Activated CD4-positive, alpha-beta T cell treated with anti-CD3 and anti-CD28 coated beads, Interleukin-2, amount 10 ng/mL, durations not matched to agents 24 days and 14 days (primary cell): ENCODE measurements at regions of chr1 and their contacts with region 1.

Region 1: GRCh38 chr1:207321079-207321789 is at the start of gene CD55:
- DNase-seq: peak; percentile 100
- H3K4me3 Mint-ChIP-seq: peak within 1 kb of the TSS; percentile 98
- H3K27ac Mint-ChIP-seq: peak within 1 kb of the TSS; percentile 100
- H3K4me1 Mint-ChIP-seq: peaks cover 35% of the 10 kb centered on the region
- H3K27me3 Mint-ChIP-seq: peaks cover 3% of the 10 kb centered on the region
- total RNA-seq, gene CD55: 133 and 142 TPM in 2 replicates

Region 2: DNA sequence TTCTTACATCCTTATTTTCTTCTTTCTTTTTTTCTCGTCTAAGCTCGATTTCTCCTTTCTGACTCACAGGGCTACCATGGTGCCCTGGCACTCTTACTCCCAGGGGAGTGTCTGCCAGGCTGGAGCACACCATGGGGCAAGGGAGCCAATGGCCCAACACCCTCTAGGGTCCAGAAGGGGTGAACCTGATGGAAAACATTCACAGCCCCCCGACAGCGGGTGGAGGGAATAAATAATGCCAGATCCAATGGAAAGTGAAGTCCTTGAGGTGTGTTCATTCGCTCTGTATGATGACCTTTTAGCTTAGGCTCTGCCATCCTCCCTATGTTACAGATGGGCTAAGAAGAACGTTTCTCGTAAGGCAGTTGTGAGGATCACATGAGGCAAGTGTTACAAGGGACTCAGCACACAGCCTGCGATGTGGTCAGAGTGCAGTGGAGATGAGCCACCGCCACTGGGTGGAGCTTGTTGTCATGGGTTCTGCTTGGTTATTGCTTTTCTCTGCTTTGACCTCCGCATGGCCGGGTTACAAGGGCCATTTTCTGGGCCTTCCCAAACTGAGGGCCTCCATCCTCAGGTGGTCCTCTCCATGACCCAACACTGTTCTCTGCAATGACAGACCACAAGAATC is 396.0 kb before region 1 on chr1:
- intact Hi-C with region 1: loop called (anchors 1 kb)
- DNase-seq: peak; percentile 85
- H3K4me3 Mint-ChIP-seq: no peak overlapping the region
- H3K27ac Mint-ChIP-seq: no peak overlapping the region
- H3K4me1 Mint-ChIP-seq: peaks cover 24% of the 10 kb centered on the region
- H3K27me3 Mint-ChIP-seq: no peaks in the 10 kb centered on the region

Region 3: DNA sequence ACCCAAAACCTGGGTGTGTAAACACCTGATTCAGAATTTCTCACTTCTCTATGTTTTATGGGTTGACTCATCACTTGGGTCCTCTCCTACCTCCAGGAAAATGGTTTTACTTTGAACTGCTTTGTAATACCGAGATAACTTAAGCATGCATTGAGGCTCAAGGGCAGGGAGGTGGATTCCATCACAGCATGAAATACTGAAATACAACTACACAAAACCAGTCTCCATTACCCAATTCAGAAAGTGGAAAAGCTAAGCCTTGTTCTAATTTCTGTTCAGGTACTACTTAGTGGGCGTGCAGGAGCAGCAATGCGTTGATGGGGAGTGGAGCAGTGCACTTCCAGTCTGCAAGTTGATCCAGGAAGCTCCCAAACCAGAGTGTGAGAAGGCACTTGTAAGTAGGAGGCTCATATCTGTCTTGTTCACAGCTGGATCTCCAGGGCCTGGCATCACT is 223.3 kb before region 1 on chr1:
- intact Hi-C with region 1: loop called (anchors 1 kb)
- DNase-seq: peak; percentile 75
- H3K4me3 Mint-ChIP-seq: peak overlapping the region; percentile 29
- H3K27ac Mint-ChIP-seq: peak overlapping the region; percentile 86
- H3K4me1 Mint-ChIP-seq: peaks cover 23% of the 10 kb centered on the region
- H3K27me3 Mint-ChIP-seq: peaks cover 9% of the 10 kb centered on the region

Region 4: GRCh38 chr1:207152792-207153434 is 168.3 kb before region 1 on chr1:
- intact Hi-C with region 1: no loop called
- DNase-seq: no peak
- H3K4me3 Mint-ChIP-seq: no peak overlapping the region
- H3K27ac Mint-ChIP-seq: no peak overlapping the region
- H3K4me1 Mint-ChIP-seq: no peaks in the 10 kb centered on the region
- H3K27me3 Mint-ChIP-seq: peaks cover 11% of the 10 kb centered on the region

Region 5: DNA sequence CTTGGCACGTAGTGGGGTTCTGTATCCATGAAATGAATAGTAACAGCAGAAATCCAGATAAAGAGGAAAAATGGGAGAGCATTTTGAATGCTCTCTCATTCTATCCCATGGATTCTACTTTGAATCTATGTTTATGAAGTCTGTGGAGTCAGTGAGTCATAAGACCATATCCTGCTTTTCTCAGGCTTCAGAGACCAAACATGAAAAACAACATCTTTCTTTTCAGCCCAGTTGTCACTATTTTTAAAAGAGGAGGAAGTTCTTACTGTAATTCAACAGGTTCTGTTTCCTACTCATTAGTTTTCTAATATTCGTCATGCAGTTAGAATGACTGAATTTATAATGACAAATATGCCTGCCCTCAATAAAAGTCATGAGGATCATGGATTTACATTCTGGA is 39.2 kb before region 1 on chr1:
- intact Hi-C with region 1: loop called (anchors 2 kb)
- DNase-seq: no peak
- H3K4me3 Mint-ChIP-seq: peak overlapping the region; percentile 55
- H3K27ac Mint-ChIP-seq: peak overlapping the region; percentile 84
- H3K4me1 Mint-ChIP-seq: peaks cover 48% of the 10 kb centered on the region
- H3K27me3 Mint-ChIP-seq: peaks cover 1% of the 10 kb centered on the region

Region 6: DNA sequence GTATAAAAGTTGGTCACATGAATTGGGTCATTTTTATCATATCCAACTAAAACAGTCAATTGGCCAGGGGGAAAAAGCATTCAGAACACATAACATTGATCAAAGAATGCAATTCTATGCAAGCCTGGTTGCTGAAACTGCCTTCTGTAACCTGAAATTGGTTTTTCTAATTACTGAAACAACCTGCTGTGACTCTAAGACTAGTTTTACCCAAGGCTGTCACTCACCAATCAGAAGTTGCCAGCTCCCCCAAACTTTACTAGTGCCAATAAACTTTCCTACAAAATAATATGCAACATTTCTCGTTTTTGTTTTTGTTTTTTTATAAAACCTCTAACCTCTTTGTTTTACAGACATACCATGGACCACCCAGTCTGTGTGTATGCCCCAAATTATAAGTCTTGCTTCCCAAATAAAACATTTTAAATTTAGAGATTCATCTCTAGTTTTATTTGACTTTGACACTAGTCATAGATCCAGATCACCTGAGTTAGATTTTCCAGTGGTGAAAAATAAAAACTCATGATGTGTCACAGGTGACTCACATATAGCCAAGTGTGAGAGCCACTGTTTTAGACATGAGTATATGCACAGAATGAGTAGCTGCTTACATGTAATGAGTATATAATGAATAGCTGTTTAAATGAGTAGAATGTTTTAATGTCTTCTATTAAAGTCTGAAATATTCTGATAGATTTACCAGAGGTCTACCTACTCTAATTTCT is 68.7 kb after region 1 on chr1:
- intact Hi-C with region 1: loop called (anchors 1 kb)
- DNase-seq: no peak
- H3K4me3 Mint-ChIP-seq: no peak overlapping the region
- H3K27ac Mint-ChIP-seq: peak overlapping the region; percentile 82
- H3K4me1 Mint-ChIP-seq: peaks cover 8% of the 10 kb centered on the region
- H3K27me3 Mint-ChIP-seq: no peaks in the 10 kb centered on the region

Region 7: GRCh38 chr1:207404849-207405525 is 83.8 kb after region 1 on chr1:
- intact Hi-C with region 1: loop called (anchors 1 kb)
- DNase-seq: peak; percentile 69
- H3K4me3 Mint-ChIP-seq: no peak overlapping the region
- H3K27ac Mint-ChIP-seq: no peak overlapping the region
- H3K4me1 Mint-ChIP-seq: peaks cover 18% of the 10 kb centered on the region
- H3K27me3 Mint-ChIP-seq: no peaks in the 10 kb centered on the region